Caco-2 (cell line): ENCODE measurements at regions of chr4 and their contacts with region 1.

Region 1: GRCh38 chr4:151418385-151418784 is 9.4 kb downstream of the FHIP1A start:
- DNase-seq: peak; percentile 61 to 63
- H3K4me3 ChIP-seq: no peak overlapping the region
- H3K4me3 Mint-ChIP-seq: peak overlapping the region; percentile 6
- H3K27ac Mint-ChIP-seq: peak overlapping the region; percentile 87
- H3K4me1 ChIP-seq: peaks cover 25% of the 10 kb centered on the region
- H3K4me1 Mint-ChIP-seq: peaks cover 21% of the 10 kb centered on the region
- H3K27me3 ChIP-seq: no peaks in the 10 kb centered on the region
- H3K27me3 Mint-ChIP-seq: no peaks in the 10 kb centered on the region
- CTCF ChIP-seq: no peak

Region 2: DNA sequence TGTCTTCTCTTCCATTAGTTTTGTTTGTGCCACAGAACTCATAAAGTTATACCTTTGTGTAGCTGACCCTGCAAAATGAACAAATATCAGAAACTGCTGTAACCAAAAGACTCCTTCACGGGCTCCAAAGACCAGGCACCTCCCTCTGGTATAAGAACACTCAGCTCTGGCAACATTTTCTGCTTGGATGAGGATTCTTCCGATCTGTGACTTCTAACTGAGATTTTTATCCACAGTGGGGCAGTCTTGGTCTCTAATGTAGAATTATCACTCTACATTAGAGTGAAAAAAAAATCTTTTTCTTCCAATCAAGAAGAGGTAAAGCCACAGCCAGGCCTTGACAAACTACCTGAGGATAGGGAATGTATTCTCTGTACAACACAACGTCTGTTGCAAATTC is 179.9 kb before region 1 on chr4:
- CTCF ChIA-PET with region 1: no interaction called
- POLR2A ChIA-PET with region 1: no interaction called
- intact Hi-C with region 1: no loop called
- DNase-seq: no peak
- H3K4me3 ChIP-seq: no peak overlapping the region
- H3K4me3 Mint-ChIP-seq: no peak overlapping the region
- H3K27ac Mint-ChIP-seq: peak overlapping the region; percentile 22
- H3K4me1 ChIP-seq: peaks cover 10% of the 10 kb centered on the region; the same call in 1 of the 2 replicates
- H3K4me1 Mint-ChIP-seq: peaks cover 3% of the 10 kb centered on the region
- H3K27me3 ChIP-seq: no peaks in the 10 kb centered on the region
- H3K27me3 Mint-ChIP-seq: no peaks in the 10 kb centered on the region
- CTCF ChIP-seq: no peak

Region 3: GRCh38 chr4:151459375-151459774 is 41.0 kb after region 1 on chr4:
- CTCF ChIA-PET with region 1: no interaction called
- POLR2A ChIA-PET with region 1: no interaction called
- intact Hi-C with region 1: loop called (anchors 2 kb)
- DNase-seq: no peak
- H3K4me3 ChIP-seq: no peak overlapping the region
- H3K4me3 Mint-ChIP-seq: no peak overlapping the region
- H3K27ac Mint-ChIP-seq: no peak overlapping the region
- H3K4me1 ChIP-seq: peaks cover 23% of the 10 kb centered on the region
- H3K4me1 Mint-ChIP-seq: peaks cover 27% of the 10 kb centered on the region
- H3K27me3 ChIP-seq: no peaks in the 10 kb centered on the region
- H3K27me3 Mint-ChIP-seq: no peaks in the 10 kb centered on the region
- CTCF ChIP-seq: no peak